Dendritic cell treated with granulocyte-macrophage colony-stimulating factor and Interleukin-4, amounts not matched to agents 40 ng/mL and 50 ng/mL, for 4 days (primary cell): ENCODE measurements at regions of chr6 and their contacts with region 1.

Region 1: DNA sequence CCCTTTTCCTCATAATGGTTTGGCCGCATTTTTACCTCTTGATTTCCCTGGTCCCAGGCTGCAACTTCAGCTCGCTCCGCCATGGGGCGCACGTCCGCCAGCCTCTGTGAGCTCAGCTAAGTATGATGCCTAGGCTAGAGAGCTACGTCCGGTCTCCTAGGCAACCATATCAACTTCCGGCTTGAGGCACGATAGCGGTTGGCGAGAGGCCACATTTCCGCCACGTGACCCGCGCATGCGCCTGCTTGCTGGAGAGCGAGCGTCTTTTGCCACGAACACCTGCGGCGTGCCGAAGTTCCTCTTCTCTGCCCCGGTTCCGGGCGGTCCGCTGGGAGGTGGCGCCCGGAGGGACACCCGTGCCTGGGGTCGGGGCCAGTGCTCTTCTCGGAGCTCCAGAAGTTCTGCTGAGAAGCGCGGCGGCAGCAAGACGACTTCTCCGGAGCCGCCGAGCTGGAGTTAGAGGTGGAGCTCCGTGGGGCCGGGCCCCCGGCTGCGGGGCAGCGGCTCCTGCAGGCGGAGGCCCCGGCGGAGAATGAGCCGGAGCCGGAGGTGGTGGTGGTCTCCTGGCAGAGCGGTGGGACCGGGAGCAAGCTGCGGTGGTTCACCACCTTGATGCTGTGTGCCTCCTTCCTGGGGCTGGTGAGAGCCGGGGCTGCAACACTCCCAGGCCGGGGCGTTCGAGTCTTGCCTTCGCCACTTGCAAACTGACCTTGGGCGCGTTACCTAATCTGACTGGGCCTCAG is 172.0 kb downstream of the SLC16A10 start:
- H3K4me3 Mint-ChIP-seq: peak overlapping the region; percentile 79
- H3K27ac Mint-ChIP-seq: peak overlapping the region; percentile 89
- H3K4me1 Mint-ChIP-seq: peaks cover 25% of the 10 kb centered on the region
- H3K27me3 Mint-ChIP-seq: peaks cover 4% of the 10 kb centered on the region

Region 2: DNA sequence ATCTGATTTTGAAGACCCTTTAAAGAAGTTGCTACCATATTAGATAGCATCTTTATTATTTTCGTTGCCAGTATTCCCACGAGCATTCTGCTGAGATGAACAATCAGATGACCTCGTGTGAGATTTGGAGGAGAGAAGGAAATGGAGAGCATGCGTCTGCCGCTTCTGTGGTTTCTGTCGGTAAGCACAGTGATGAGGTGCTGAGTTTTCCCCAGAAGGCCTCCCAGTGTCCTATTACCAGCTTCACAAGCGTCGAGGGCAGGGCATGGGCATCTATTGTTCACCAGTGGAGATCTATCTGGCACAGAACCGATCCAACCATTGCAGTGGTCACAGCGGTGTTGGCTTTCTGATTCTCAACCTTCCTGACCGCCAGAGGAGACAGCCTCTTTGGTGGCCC is 317.0 kb after region 1 on chr6:
- intact Hi-C with region 1: loop called (anchors 2 kb)
- H3K4me3 Mint-ChIP-seq: no peak overlapping the region
- H3K27ac Mint-ChIP-seq: peak overlapping the region; percentile 88
- H3K4me1 Mint-ChIP-seq: peaks cover 24% of the 10 kb centered on the region
- H3K27me3 Mint-ChIP-seq: no peaks in the 10 kb centered on the region

Region 3: GRCh38 chr6:111642463-111643158 is 383.4 kb after region 1 on chr6:
- intact Hi-C with region 1: loop called (anchors 2 kb)
- H3K4me3 Mint-ChIP-seq: no peak overlapping the region
- H3K27ac Mint-ChIP-seq: no peak overlapping the region
- H3K4me1 Mint-ChIP-seq: no peaks in the 10 kb centered on the region
- H3K27me3 Mint-ChIP-seq: no peaks in the 10 kb centered on the region

Region 4: DNA sequence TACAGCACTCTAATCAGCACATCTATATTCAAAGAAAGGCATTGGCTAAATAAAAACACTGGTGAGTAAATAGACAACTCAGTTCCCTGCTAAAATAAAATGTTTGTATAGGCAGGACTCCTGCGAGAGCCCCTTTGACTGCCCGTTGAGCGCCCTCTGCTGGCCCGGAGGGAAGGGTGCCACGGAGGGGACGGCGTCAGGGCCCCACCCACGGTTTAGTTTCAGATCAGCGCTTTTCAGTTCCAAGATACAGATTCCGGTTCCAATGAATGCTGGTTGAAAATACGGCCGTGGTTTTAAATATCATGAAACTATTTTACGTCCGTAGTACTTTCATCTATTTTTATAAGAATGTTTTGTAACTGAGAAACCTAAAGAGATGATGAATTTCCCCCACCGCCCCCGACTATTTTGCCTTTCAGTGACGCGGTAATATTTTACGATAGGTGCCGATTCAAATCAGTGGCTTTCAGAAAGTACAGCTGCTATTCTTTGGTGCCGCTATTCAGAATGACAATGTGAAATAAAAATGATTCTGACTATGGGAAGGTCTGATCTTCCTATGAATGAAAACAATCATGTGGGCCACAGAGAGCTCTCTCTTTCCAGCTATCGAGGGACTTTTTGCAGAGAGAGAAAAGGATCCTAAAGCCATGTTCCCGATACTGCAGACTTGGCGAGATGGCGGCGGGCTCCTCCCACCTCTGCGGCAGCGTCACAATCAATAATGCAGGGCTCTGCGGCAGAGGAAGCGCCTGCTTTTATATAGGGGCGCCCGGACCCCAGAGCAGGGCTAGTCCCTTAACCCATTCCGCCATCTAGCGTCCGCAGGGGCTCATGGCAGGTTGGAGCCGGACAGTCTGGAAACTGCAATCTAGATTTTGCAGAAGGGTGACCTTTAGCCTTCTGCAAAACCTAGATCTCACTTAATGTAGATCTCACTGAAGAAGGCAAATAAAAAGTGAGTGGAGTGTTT is 784.1 kb after region 1 on chr6:
- intact Hi-C with region 1: loop called (anchors 10 kb)
- H3K4me3 Mint-ChIP-seq: peak overlapping the region; percentile 76
- H3K27ac Mint-ChIP-seq: peak overlapping the region; percentile 92
- H3K4me1 Mint-ChIP-seq: peaks cover 10% of the 10 kb centered on the region
- H3K27me3 Mint-ChIP-seq: no peaks in the 10 kb centered on the region